Activated B cell treated with CpG ODN at 0.5 μM for 24 hours (primary cell): ENCODE measurements at regions of chr12 and their contacts with region 1.

Region 1: DNA sequence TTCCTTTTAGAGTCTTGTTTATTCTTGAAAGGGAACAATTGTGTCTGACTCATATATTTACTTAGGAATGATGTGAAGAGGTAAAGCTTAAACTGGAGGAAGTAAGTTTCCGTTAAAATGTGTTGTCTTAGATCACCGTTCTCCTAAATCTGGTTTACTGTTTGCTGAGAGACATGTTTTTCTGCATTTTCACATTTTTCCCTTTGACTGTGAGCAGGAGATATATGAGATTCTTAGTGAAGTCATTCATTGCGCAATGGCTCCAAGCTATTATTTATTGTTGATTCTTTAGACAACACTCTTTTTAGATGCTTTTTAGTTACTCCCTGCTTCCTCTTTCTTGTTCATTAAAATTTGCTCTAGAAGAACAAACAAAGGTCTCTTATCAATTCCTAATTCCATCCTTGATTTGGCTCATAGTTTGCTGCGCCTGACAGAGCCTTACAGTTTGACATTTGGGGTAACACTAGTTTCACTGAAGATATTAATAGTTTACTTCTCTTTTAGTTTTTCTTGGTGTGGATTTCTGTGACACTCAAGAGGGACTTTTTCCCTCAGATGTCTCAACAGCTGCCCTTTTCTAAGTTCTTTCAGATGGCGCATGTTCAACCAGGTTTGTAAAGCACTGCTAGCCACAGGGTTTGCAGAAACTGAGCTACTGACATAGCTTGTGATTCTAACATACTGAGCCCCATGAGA is 11.4 kb downstream of the CLECL1 start:
- DNase-seq: no peak
- ATAC-seq: peak; percentile 85
- H3K4me3 Mint-ChIP-seq: peak overlapping the region; percentile 69
- H3K27ac Mint-ChIP-seq: peak overlapping the region; percentile 96
- H3K4me1 Mint-ChIP-seq: peaks cover 95% of the 10 kb centered on the region
- H3K27me3 Mint-ChIP-seq: no peaks in the 10 kb centered on the region
- CTCF ChIP-seq: no peak

Region 2: DNA sequence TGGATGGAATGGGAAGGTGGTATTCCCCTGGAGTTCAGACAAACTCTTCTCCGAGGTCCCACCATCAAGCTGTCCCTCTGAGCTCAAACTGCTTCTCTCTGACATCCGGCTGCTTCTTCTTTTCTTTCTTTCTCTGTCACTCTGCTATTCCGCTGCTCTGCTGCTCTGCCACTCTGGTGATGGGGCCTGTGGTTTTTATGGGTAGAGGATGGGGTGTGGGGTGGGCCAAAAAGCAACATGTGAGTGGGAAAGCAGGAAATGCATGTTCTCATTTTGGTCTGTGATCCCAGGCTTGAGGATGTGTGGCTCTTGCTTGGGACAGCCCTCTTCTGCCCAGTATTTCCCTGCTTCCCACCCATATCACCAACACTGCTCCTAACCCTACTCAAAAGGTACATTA is 19.3 kb before region 1 on chr12:
- CTCF ChIA-PET with region 1: interaction called, 13 read pairs
- POLR2A ChIA-PET with region 1: interaction called, 37 read pairs
- intact Hi-C with region 1: loop called (anchors 2 kb)
- DNase-seq: no peak
- ATAC-seq: peak; percentile 41
- H3K4me3 Mint-ChIP-seq: peak overlapping the region; percentile 65
- H3K27ac Mint-ChIP-seq: peak overlapping the region; percentile 85
- H3K4me1 Mint-ChIP-seq: peaks cover 85% of the 10 kb centered on the region
- H3K27me3 Mint-ChIP-seq: no peaks in the 10 kb centered on the region
- CTCF ChIP-seq: no peak

Region 3: DNA sequence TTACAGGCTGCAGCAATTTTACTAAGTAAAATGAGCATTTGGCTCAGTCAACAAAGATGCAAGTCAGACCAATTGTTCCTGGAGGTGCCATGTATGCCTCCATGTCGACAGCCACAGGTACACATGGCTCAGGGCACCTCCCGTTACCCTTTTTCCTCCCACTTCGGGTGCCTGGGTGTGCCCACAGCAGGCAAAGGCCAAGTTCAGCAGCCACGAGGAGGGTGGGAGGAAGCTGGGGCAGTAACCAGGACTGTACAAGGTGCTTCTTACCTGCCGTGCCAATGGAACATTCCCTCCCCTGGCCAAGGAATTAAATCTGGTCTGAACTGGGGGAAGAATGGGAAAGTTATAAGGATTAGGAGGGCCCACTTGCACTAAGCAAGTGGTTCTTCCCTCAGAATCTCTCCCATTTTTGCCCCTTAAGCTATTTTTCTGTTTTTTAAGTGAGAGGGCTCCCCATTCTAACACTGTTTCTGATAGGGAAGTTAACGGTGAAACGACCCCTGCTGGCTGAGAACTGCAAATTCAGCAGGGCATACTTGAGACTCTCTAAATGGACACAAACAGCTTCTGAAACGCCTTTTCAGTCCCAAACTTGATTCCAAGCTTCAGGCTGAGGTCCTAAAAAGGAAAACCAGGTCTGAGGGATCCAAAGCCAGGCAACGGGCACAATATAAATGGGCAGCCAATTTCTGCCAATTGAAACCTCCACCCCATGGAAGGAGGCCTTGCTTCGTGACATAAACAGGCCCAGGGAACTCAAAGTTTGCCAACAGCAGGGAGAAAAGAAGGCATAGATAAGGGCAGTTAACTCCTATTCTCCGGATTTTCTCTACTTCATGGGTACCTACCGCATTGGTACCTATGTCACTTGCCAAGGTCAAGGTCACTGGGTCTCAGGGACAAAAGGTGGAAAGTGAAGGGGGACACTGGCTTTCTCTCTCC is 13.4 kb before region 1 on chr12:
- CTCF ChIA-PET with region 1: interaction called, 13 read pairs
- POLR2A ChIA-PET with region 1: interaction called, 37 read pairs
- intact Hi-C with region 1: loop called (anchors 1 kb)
- DNase-seq: no peak
- ATAC-seq: peak; percentile 50
- H3K4me3 Mint-ChIP-seq: peak overlapping the region; percentile 59
- H3K27ac Mint-ChIP-seq: peak overlapping the region; percentile 93
- H3K4me1 Mint-ChIP-seq: peaks cover 89% of the 10 kb centered on the region
- H3K27me3 Mint-ChIP-seq: no peaks in the 10 kb centered on the region
- CTCF ChIP-seq: peak; percentile 23

Region 4: DNA sequence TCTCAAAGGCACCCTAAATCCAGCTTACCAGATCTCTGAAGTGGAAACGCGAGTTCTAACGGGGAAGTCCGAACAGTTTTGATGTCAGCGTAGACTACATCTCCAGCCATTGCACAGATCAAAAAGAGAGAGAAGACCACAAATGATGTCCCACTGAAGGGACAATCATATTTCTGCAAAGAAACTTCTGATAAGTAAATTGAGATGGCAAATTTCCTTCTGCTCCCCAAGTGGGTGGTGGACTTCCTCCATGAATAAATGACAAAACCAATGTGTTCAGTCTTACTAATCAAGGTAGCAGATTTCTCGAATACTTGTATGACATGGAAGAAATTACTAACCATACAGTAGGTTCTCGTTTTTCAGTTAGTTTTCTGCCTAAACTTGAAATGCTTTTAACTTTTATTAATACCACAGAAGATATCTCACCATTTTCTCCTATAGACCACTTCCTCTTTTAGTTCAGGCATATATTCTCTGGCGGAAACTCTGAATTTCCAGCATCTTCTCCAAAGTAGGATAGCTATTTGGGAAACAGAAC is 11.4 kb after region 1 on chr12 and contains the start of gene CLECL1:
- CTCF ChIA-PET with region 1: interaction called, 7 read pairs
- POLR2A ChIA-PET with region 1: interaction called, 127 read pairs
- intact Hi-C with region 1: loop called (anchors 1 kb)
- DNase-seq: no peak
- ATAC-seq: peak; percentile 49
- H3K4me3 Mint-ChIP-seq: peak within 1 kb of the TSS; percentile 88
- H3K27ac Mint-ChIP-seq: peak within 1 kb of the TSS; percentile 94
- H3K4me1 Mint-ChIP-seq: peaks cover 84% of the 10 kb centered on the region
- H3K27me3 Mint-ChIP-seq: no peaks in the 10 kb centered on the region
- CTCF ChIP-seq: no peak
- total RNA-seq, gene CLECL1: 111 and 115 TPM in 2 replicates

Region 5: GRCh38 chr12:9760699-9761418 is 39.3 kb after region 1 on chr12 and contains the start of gene CD69:
- CTCF ChIA-PET with region 1: no interaction called
- POLR2A ChIA-PET with region 1: interaction called, 12 read pairs
- intact Hi-C with region 1: loop called (anchors 2 kb)
- DNase-seq: peak; percentile 33
- ATAC-seq: peak; percentile 54
- H3K4me3 Mint-ChIP-seq: peak within 1 kb of the TSS; percentile 90
- H3K27ac Mint-ChIP-seq: peak within 1 kb of the TSS; percentile 93
- H3K4me1 Mint-ChIP-seq: peaks cover 81% of the 10 kb centered on the region
- H3K27me3 Mint-ChIP-seq: no peaks in the 10 kb centered on the region
- CTCF ChIP-seq: no peak
- total RNA-seq, gene CD69: 23.7 and 26.7 TPM in 2 replicates

Region 6: DNA sequence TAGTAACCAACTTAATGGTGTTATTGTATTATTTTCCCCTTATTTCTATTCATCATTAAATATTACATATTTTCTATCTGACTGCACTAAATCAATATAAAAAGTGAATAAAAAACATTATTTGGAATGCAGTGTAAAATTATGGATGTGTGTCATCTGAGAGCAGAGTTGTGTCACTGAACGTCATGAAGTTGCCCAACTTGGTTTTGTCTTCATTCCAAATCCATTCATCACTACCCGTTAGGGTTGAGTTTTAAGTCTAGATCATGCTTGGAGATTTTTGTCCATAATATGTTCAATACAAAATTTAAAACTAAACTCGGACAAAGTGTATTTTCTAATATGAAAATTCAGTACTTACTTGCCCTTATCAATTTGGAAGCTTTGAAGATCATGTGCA is 121.9 kb after region 1 on chr12:
- CTCF ChIA-PET with region 1: no interaction called
- POLR2A ChIA-PET with region 1: no interaction called
- intact Hi-C with region 1: no loop called
- DNase-seq: no peak
- ATAC-seq: no peak
- H3K4me3 Mint-ChIP-seq: no peak overlapping the region
- H3K27ac Mint-ChIP-seq: no peak overlapping the region
- H3K4me1 Mint-ChIP-seq: no peaks in the 10 kb centered on the region
- H3K27me3 Mint-ChIP-seq: peaks cover 4% of the 10 kb centered on the region
- CTCF ChIP-seq: no peak